GM10248 (cell line): ENCODE measurements at regions of chr5 and their contacts with region 1.

Region 1: GRCh38 chr5:140207250-140207964 is 32.4 kb downstream of the CYSTM1 start:
- DNase-seq: no peak
- CTCF ChIP-seq: no peak

Region 2: DNA sequence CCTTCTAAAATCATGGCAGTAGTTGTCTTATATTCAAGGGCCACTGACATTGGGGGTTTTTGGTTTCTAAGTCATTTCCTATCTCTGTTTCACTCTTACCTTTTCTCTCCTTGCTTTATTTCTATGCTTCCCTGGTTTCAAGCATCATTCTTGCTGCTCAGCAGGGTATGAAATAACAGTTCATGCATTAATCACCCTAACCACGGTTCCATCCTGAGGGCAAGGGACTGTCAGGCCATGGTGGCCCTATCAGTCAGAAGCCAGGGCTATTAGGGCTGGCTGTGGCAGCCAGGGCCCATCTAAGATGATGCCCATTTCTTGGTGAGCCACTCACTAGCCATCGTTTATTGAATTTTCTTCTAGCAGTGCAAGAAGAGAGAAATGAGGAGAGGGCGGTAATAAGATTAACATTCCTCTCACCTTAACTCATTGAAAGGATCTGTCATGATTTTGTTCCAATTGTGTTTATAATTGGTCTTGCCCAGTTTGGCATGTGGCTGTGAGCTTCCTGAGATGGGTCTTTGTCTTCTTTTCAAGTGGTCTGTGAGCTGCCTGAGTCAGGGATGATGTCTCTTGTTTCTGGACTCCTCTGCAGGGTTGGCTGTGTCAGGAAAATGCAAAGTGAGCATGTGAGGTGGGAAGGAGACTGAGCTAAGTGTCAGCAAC is 12.8 kb after region 1 on chr5:
- CTCF ChIA-PET with region 1: interaction called, 15 read pairs
- POLR2A ChIA-PET with region 1: no interaction called
- DNase-seq: peak; percentile 32
- CTCF ChIP-seq: no peak

Region 3: GRCh38 chr5:140497897-140498296 is 290.5 kb after region 1 on chr5:
- CTCF ChIA-PET with region 1: no interaction called
- POLR2A ChIA-PET with region 1: no interaction called
- DNase-seq: no peak
- CTCF ChIP-seq: no peak